Prostate gland (tissue), 2 donors: ENCODE measurements at regions of chr1 and their contacts with region 1.

Region 1: DNA sequence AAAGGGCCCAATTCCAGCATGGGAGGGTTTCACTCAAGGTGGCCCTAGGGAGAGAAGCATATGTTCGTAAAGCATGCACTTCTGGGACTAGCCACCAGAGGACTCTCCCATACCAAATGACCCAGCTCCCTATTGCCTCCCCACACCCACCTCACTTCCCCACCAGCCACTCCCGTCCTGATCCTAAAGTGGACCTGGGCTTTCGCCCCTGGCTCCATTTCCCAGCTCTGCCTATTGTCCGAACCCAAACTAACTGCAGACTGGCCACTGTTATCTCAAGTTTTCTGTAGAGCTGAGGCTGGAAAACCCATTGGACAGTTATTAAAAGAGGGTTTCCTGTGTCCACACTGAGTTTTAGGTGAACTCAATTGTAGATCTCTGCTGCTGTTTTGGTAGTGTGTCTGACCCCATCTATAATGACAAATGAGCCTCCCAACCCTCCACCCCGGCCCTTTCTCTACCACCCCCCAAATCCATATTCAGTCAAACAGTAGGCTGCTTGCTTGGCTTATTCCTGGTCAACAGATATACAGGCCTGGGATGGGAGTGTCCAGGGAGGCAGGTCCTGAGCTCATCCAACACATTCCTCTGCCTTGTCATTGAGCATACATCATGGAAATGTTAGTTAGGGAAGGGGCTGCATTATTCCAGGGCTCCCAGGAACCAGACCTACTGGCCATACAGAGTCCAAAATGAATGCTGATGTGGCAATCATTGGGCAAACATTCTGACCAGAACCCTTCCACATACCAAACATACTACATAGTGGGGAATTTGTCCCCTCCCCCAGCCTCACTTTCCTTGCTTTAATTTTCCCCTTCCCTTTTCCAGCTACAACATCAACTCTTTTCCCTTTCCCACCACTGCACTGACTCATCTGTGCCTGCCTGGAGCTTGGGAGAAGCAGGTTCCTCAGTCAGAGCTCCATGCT is 59.2 kb downstream of the ABCA4 start:
- DNase-seq: peak; percentile 67
- H3K4me3 ChIP-seq: no peak overlapping the region
- H3K27ac ChIP-seq: no peak overlapping the region
- H3K4me1 ChIP-seq: no peaks in the 10 kb centered on the region
- H3K27me3 ChIP-seq: no peaks in the 10 kb centered on the region
- CTCF ChIP-seq: peak; percentile 81 to 95 (median 90)
- POLR2A ChIP-seq: no peak

Region 2: DNA sequence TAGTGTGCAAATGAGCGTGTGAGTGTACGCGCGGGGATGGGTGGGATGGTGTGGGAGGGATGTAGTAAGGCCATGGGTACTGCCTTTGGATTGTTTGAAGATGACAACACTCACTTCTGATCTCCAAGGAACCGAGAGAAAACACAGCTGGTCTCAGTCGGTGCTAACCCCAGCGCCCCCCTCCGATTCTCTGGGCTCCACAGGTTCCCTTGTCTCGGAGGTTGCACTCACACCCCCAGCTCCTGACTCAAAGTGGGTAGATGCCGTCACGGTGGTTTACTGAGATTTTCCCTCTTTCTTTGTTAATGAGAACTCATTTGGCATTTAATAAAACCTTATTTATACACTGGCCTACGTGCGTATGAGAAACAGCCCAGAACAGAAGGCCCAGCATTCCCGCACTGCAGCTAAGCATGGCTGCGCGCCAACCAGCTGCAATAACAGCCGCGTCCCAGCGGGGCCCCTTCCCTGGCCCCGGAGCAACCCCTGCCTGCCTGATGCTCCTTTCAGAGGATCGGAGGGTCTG is 33.4 kb after region 1 on chr1:
- intact Hi-C with region 1: loop called (anchors 5 kb)
- DNase-seq: peak; percentile 29
- H3K4me3 ChIP-seq: no peak overlapping the region
- H3K27ac ChIP-seq: peak overlapping the region; percentile 65 to 66
- H3K4me1 ChIP-seq: peaks cover 7% of the 10 kb centered on the region
- H3K27me3 ChIP-seq: no peaks in the 10 kb centered on the region
- CTCF ChIP-seq: no peak
- POLR2A ChIP-seq: no peak

Region 3: GRCh38 chr1:94237291-94238226 is 175.8 kb after region 1 on chr1 and contains the start of gene ARHGAP29:
- intact Hi-C with region 1: loop called (anchors 5 kb)
- DNase-seq: peak; percentile 80
- H3K4me3 ChIP-seq: peak within 1 kb of the TSS; percentile 94
- H3K27ac ChIP-seq: peak within 1 kb of the TSS; percentile 88 to 93
- H3K4me1 ChIP-seq: peaks cover 3% of the 10 kb centered on the region
- H3K27me3 ChIP-seq: no peaks in the 10 kb centered on the region
- CTCF ChIP-seq: peak in 1 of 4 experiments; percentile 47
- POLR2A ChIP-seq: peak; percentile 93
- total RNA-seq, gene ARHGAP29: 27.8 to 32.9 TPM

Region 4: GRCh38 chr1:94335950-94336349 is 274.2 kb after region 1 on chr1:
- intact Hi-C with region 1: loop called (anchors 2 kb)
- DNase-seq: peak; percentile 88
- H3K4me3 ChIP-seq: no peak overlapping the region
- H3K27ac ChIP-seq: no peak overlapping the region
- H3K4me1 ChIP-seq: no peaks in the 10 kb centered on the region
- H3K27me3 ChIP-seq: no peaks in the 10 kb centered on the region
- CTCF ChIP-seq: peak; percentile 68 to 98 (median 92)
- POLR2A ChIP-seq: no peak